Activated B cell treated with CpG ODN at 0.5 μM for 24 hours (primary cell): ENCODE measurements at regions of chr14 and their contacts with region 1.

Region 1: GRCh38 chr14:23095196-23096108 is at the start of gene C14orf119:
- DNase-seq: peak; percentile 77
- ATAC-seq: peak; percentile 87
- H3K4me3 Mint-ChIP-seq: no peak within 1 kb of the TSS
- H3K27ac Mint-ChIP-seq: no peak within 1 kb of the TSS
- H3K4me1 Mint-ChIP-seq: peaks cover 34% of the 10 kb centered on the region
- H3K27me3 Mint-ChIP-seq: no peaks in the 10 kb centered on the region
- CTCF ChIP-seq: no peak
- total RNA-seq, gene C14orf119: 35.3 and 36.0 TPM in 2 replicates

Region 2: GRCh38 chr14:22918804-22919600 is 176.4 kb before region 1 on chr14 and contains the start of gene RBM23:
- CTCF ChIA-PET with region 1: no interaction called
- POLR2A ChIA-PET with region 1: interaction called, 4 read pairs
- intact Hi-C with region 1: loop called (anchors 2 kb)
- DNase-seq: peak; percentile 94
- ATAC-seq: peak; percentile 94
- H3K4me3 Mint-ChIP-seq: peak within 1 kb of the TSS; percentile 99
- H3K27ac Mint-ChIP-seq: peak within 1 kb of the TSS; percentile 100
- H3K4me1 Mint-ChIP-seq: peaks cover 53% of the 10 kb centered on the region
- H3K27me3 Mint-ChIP-seq: no peaks in the 10 kb centered on the region
- CTCF ChIP-seq: no peak
- total RNA-seq, gene RBM23: 130 and 131 TPM in 2 replicates

Region 3: DNA sequence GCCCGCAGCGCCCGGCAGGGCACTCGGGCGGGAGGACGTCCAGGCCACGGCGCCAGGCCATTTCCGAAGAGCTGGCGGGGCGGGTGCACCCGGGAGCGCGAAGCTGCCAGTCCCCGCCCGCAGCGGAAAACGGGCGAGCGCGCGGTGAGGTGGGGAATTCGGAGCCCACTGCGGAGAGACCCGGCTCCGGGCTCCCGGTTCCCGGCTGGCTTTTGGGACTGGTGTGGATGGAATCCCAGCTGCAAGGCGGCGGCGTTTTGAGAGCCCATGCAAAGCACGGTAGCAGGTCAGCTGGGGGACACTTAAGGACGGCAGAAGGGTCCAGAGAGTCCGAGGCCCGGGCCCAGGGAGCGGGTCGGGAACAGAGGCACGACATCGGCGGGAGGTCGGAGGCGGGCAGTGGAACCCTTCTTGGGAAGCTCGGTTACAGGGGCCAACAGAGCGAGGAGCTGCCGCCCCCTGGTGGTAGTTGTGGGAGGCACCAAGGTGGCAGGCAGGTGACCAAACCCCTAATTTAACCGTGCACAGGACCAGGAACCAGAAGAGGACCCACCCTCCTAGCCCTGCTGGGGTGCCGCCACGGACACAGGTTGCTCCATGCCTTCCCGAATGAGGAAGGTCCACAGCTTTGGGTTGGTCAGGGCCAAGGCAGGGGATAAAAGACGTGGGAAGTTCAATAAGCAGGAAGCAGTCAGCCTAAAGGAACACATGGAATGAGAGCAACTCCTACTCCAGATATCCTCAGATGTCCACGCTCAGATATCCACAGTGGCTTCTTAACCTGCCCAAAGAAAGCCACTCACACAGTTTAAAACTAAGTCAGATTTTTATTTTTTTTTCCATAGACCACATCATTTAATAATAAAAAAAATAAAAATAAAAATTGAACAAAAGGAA is 37.4 kb before region 1 on chr14:
- CTCF ChIA-PET with region 1: no interaction called
- POLR2A ChIA-PET with region 1: interaction called, 12 read pairs
- intact Hi-C with region 1: no loop called
- DNase-seq: peak; percentile 80
- ATAC-seq: peak; percentile 73
- H3K4me3 Mint-ChIP-seq: peak overlapping the region; percentile 88
- H3K27ac Mint-ChIP-seq: no peak overlapping the region
- H3K4me1 Mint-ChIP-seq: peaks cover 18% of the 10 kb centered on the region
- H3K27me3 Mint-ChIP-seq: peaks cover 2% of the 10 kb centered on the region
- CTCF ChIP-seq: peak; percentile 58

Region 4: GRCh38 chr14:23120541-23121251 is 25.2 kb after region 1 on chr14:
- CTCF ChIA-PET with region 1: interaction called, 28 read pairs
- POLR2A ChIA-PET with region 1: interaction called, 50 read pairs
- intact Hi-C with region 1: loop called (anchors 1 kb)
- DNase-seq: peak; percentile 67
- ATAC-seq: peak; percentile 87
- H3K4me3 Mint-ChIP-seq: peak overlapping the region; percentile 67
- H3K27ac Mint-ChIP-seq: peak overlapping the region; percentile 89
- H3K4me1 Mint-ChIP-seq: peaks cover 36% of the 10 kb centered on the region
- H3K27me3 Mint-ChIP-seq: no peaks in the 10 kb centered on the region
- CTCF ChIP-seq: peak; percentile 84

Region 5: GRCh38 chr14:23320774-23321571 is 225.5 kb after region 1 on chr14 and contains the start of gene PABPN1:
- CTCF ChIA-PET with region 1: interaction called, 4 read pairs
- POLR2A ChIA-PET with region 1: interaction called, 35 read pairs
- intact Hi-C with region 1: loop called (anchors 1 kb)
- DNase-seq: peak; percentile 89
- ATAC-seq: peak; percentile 87
- H3K4me3 Mint-ChIP-seq: peak within 1 kb of the TSS; percentile 90
- H3K27ac Mint-ChIP-seq: peak within 1 kb of the TSS; percentile 98
- H3K4me1 Mint-ChIP-seq: peaks cover 26% of the 10 kb centered on the region
- H3K27me3 Mint-ChIP-seq: no peaks in the 10 kb centered on the region
- CTCF ChIP-seq: no peak
- total RNA-seq, gene PABPN1: 259 and 264 TPM in 2 replicates

Region 6: DNA sequence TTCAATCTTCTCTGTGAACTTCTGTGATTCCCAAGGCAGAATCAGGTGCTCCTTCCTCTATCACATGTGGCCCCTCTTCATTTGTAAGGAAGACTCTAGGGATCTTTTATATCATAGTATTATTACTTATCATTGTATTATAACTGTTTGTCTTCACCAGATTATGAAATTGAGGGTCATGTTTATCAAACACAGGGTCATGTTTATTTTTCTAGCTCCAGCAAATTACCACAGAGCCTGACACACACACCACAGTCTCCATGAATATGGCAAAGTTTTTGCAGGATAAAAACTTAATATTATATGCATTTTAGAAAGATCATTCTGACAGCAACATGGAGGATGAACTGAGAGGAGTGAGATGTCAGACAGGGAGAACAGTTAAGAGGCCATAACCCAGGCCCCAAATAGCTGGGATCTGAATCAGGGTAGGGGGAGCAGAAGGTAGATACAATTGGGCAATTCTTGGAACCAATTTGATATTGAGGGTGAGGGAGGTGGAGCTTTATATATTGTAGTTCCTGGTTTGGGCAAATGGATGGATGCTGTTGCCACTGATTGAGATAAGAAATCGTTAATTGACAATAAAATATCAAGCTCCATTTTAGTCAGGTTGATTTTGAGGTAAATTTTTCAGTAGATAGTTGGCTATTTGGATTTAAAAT is 671.4 kb after region 1 on chr14:
- CTCF ChIA-PET with region 1: no interaction called
- POLR2A ChIA-PET with region 1: no interaction called
- intact Hi-C with region 1: no loop called
- DNase-seq: no peak
- ATAC-seq: no peak
- H3K4me3 Mint-ChIP-seq: no peak overlapping the region
- H3K27ac Mint-ChIP-seq: no peak overlapping the region
- H3K4me1 Mint-ChIP-seq: no peaks in the 10 kb centered on the region
- H3K27me3 Mint-ChIP-seq: peaks cover 10% of the 10 kb centered on the region
- CTCF ChIP-seq: no peak